Heart left ventricle (tissue), 16 donors: ENCODE measurements at regions of chr17 and their contacts with region 1.

Region 1: GRCh38 chr17:39153599-39154051 is 2.2 kb upstream of the PLXDC1 start:
- DNase-seq: peak; percentile 85 to 95 (median 93)
- ATAC-seq: peak; percentile 77 to 91 (median 86)
- H3K4me3 ChIP-seq: peak overlapping the region; percentile 59 to 99 (median 76)
- H3K27ac ChIP-seq: peak overlapping the region; percentile 79 to 98 (median 92)
- H3K4me1 ChIP-seq: peaks cover 0 to 36% (median 15%) of the 10 kb centered on the region in 12 donors
- H3K27me3 ChIP-seq: peaks cover 0 to 24% (median 4%) of the 10 kb centered on the region in 9 donors
- CTCF ChIP-seq: peak in 8 of 12 donors; percentile 9 to 49 (median 29)
- POLR2A ChIP-seq: peak in 1 of 2 donors; percentile 8

Region 2: GRCh38 chr17:38868817-38869525 is 284.7 kb before region 1 on chr17:
- intact Hi-C with region 1: loop called in 6 of 10 experiments (anchors 2 to 10 kb)
- DNase-seq: peak; percentile 86 to 90 (median 90)
- ATAC-seq: peak; percentile 74 to 80 (median 75)
- H3K4me3 ChIP-seq: peak overlapping the region; percentile 65 to 100 (median 84)
- H3K27ac ChIP-seq: peak overlapping the region; percentile 93 to 99 (median 96)
- H3K4me1 ChIP-seq: peaks cover 13 to 45% (median 34%) of the 10 kb centered on the region in 12 donors
- H3K27me3 ChIP-seq: no peaks in the 10 kb centered on the region
- CTCF ChIP-seq: peak in 7 of 12 donors; percentile 18 to 61 (median 33)
- POLR2A ChIP-seq: no peak

Region 3: GRCh38 chr17:38982858-38983746 is 170.5 kb before region 1 on chr17:
- intact Hi-C with region 1: loop called (anchors 1 to 2 kb)
- DNase-seq: peak in 3 of 5 donors; percentile 39 to 54 (median 42)
- ATAC-seq: peak in 3 of 4 donors; percentile 69 to 79 (median 76)
- H3K4me3 ChIP-seq: no peak overlapping the region
- H3K27ac ChIP-seq: peak overlapping the region in 5 of 12 donors; percentile 8 to 75 (median 59)
- H3K4me1 ChIP-seq: peaks cover 0 to 19% (median 0%) of the 10 kb centered on the region in 12 donors
- H3K27me3 ChIP-seq: no peaks in the 10 kb centered on the region
- CTCF ChIP-seq: peak; percentile 66 to 88 (median 82)
- POLR2A ChIP-seq: no peak

Region 4: GRCh38 chr17:39069114-39069756 is 84.4 kb before region 1 on chr17:
- intact Hi-C with region 1: loop called in 8 of 10 experiments (anchors 2 to 5 kb)
- DNase-seq: no peak
- ATAC-seq: peak; percentile 36 to 65 (median 62)
- H3K4me3 ChIP-seq: no peak overlapping the region
- H3K27ac ChIP-seq: no peak overlapping the region
- H3K4me1 ChIP-seq: peaks cover 0 to 7% (median 0%) of the 10 kb centered on the region in 12 donors
- H3K27me3 ChIP-seq: no peaks in the 10 kb centered on the region
- CTCF ChIP-seq: peak; percentile 44 to 68 (median 54)
- POLR2A ChIP-seq: no peak

Region 5: GRCh38 chr17:39244600-39245570 is 91.3 kb after region 1 on chr17:
- intact Hi-C with region 1: loop called in 1 of 10 experiments (anchors 10 kb)
- DNase-seq: peak; percentile 77 to 86 (median 79)
- ATAC-seq: peak; percentile 56 to 93 (median 87)
- H3K4me3 ChIP-seq: no peak overlapping the region
- H3K27ac ChIP-seq: no peak overlapping the region
- H3K4me1 ChIP-seq: peaks cover 0 to 13% (median 6%) of the 10 kb centered on the region in 12 donors
- H3K27me3 ChIP-seq: no peaks in the 10 kb centered on the region
- CTCF ChIP-seq: peak; percentile 87 to 99 (median 95)
- POLR2A ChIP-seq: no peak